Activated CD4-positive, alpha-beta T cell treated with anti-CD3 and anti-CD28 coated beads for 36 hours (primary cell): ENCODE measurements at regions of chr10 and their contacts with region 1.

Region 1: GRCh38 chr10:15585303-15585715 is 134.4 kb downstream of the ITGA8 start:
- DNase-seq: peak; percentile 73
- ATAC-seq: peak; percentile 65
- H3K4me3 Mint-ChIP-seq: no peak overlapping the region
- H3K27ac Mint-ChIP-seq: no peak overlapping the region
- H3K4me1 Mint-ChIP-seq: no peaks in the 10 kb centered on the region
- H3K27me3 Mint-ChIP-seq: peaks cover 11% of the 10 kb centered on the region

Region 2: DNA sequence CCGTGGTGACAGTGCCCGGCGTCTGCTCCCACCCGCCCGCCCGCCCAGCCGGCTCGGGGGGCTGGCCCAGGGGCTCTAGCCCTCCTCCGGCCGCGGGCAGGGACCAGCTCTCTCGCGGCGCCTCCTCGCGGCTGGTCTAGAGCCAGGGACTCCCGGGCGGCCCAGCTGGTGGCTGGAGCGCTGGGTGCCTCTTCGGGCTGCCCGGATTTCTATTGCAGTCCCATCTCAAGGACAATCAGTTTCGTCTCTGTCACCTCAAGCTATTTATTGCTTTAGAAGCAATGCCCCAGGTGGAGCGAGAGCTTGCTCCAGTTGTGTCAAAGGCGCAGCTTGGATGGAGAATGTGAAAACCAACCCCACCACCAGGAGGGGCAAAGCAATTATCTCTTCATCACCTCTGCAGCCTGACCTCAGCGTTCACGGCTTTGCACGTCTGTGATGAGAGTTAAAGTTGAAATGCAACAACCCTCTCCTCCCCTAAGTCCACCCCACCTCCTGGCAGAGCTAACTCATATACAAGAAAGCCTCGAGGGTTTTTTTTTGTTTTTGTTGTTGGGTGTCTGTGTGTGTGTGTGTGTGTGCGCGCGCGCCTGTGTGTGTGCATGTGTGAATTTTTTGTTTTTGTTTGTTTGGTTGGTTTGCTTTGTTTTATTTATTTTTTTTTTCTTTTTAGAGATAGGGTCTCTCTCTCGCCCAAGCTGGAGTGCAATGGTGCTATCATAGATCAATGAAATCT is 134.8 kb after region 1 on chr10 and contains the start of gene ITGA8:
- CTCF ChIA-PET with region 1: no interaction called
- POLR2A ChIA-PET with region 1: no interaction called
- intact Hi-C with region 1: loop called in 1 of 2 experiments (anchors 5 kb)
- DNase-seq: peak; percentile 20
- ATAC-seq: no peak
- H3K4me3 Mint-ChIP-seq: no peak within 1 kb of the TSS
- H3K27ac Mint-ChIP-seq: no peak within 1 kb of the TSS
- H3K4me1 Mint-ChIP-seq: peaks cover 4% of the 10 kb centered on the region
- H3K27me3 Mint-ChIP-seq: peaks cover 28% of the 10 kb centered on the region
- total RNA-seq, gene ITGA8: not detected

Region 3: GRCh38 chr10:15824498-15824897 is 239.2 kb after region 1 on chr10:
- CTCF ChIA-PET with region 1: no interaction called
- POLR2A ChIA-PET with region 1: no interaction called
- intact Hi-C with region 1: loop called in 1 of 2 experiments (anchors 10 kb)
- DNase-seq: no peak
- ATAC-seq: no peak
- H3K4me3 Mint-ChIP-seq: no peak overlapping the region
- H3K27ac Mint-ChIP-seq: no peak overlapping the region
- H3K4me1 Mint-ChIP-seq: no peaks in the 10 kb centered on the region
- H3K27me3 Mint-ChIP-seq: no peaks in the 10 kb centered on the region